OCI-LY7 (cell line): ENCODE measurements at regions of chr5 and their contacts with region 1.

Region 1: GRCh38 chr5:158695595-158696330 is 404.0 kb downstream of the EBF1 start:
- DNase-seq: peak; percentile 90
- H3K4me3 ChIP-seq: no peak overlapping the region
- H3K27ac ChIP-seq: peak overlapping the region; percentile 50
- H3K4me1 ChIP-seq: peaks cover 45% of the 10 kb centered on the region
- CTCF ChIP-seq: peak; percentile 100

Region 2: DNA sequence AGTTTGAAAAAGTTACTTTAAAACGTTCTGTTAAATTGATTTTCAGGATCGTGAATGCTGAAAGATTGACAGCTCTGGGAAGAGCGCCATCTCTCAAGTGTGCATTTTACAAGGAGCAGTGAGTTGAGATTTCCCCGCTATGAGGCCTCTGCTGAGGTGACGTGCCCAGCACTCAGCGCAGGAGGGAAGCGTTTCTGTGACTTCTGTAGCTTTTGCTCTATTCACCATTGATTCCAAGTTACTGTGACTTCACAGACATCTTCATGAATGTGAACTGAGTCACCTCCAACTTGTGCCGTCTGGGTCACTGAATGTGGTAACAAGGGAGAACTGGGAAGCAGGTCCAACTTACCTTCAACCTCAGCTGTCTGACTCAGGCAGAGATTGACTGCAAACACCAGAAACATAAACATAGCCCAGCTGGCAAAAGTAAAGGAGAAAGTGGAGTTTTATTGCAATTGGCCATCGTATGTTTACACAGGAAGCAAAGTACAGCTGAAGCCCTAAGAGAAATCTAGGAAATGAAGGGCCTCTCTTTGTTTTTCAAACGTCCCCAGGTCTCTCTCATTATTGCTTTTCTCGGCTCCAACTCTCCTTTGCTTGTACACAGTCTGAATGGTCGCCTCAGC is 408.0 kb before region 1 on chr5:
- CTCF ChIA-PET with region 1: no interaction called
- POLR2A ChIA-PET with region 1: no interaction called
- intact Hi-C with region 1: loop called (anchors 1 kb)
- DNase-seq: no peak
- H3K4me3 ChIP-seq: no peak overlapping the region
- H3K27ac ChIP-seq: no peak overlapping the region
- H3K4me1 ChIP-seq: peaks cover 22% of the 10 kb centered on the region
- CTCF ChIP-seq: no peak

Region 3: GRCh38 chr5:158354958-158355357 is 340.8 kb before region 1 on chr5:
- CTCF ChIA-PET with region 1: no interaction called
- POLR2A ChIA-PET with region 1: no interaction called
- intact Hi-C with region 1: no loop called
- DNase-seq: peak; percentile 11
- H3K4me3 ChIP-seq: no peak overlapping the region
- H3K27ac ChIP-seq: no peak overlapping the region
- H3K4me1 ChIP-seq: no peaks in the 10 kb centered on the region
- CTCF ChIP-seq: no peak

Region 4: DNA sequence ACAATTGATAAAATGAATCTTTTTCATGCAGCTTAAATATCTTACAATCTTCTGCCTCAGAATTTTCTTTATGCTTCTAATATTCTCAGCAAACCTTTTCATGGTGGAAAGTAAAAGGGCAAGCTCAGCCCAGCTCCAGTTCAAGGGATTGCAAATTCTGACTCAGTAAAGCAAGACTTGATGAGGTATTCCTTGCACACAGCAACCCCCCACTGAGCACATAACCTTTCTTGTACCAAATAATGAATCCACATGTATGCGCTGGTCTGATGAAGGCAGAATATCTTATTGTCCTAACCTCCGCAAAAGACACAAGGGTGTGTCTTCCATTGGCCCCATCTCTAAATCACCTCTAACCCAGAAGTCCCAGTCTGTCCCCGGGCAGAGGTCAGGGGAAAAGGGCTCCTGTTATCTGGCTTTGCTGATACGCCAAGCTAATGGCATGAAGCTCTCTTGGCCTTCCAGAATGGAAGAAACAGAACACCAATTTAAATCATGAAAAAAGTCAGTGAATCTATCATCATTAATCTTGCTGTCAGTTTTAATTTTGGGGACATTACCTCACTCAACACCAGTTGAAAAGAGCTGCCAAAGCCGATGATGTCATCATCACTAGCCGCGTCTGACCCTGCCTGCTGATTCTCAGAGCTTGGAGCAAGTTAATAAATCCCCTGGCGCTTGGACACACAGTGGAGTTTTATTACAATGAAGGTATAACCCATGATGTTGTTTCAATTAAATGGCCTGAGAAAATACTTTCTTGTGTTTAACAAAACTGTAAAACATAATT is 244.4 kb before region 1 on chr5:
- CTCF ChIA-PET with region 1: no interaction called
- POLR2A ChIA-PET with region 1: no interaction called
- intact Hi-C with region 1: no loop called
- DNase-seq: no peak
- H3K4me3 ChIP-seq: no peak overlapping the region
- H3K27ac ChIP-seq: no peak overlapping the region
- H3K4me1 ChIP-seq: no peaks in the 10 kb centered on the region
- CTCF ChIP-seq: no peak

Region 5: GRCh38 chr5:158770506-158770905 is 74.7 kb after region 1 on chr5:
- CTCF ChIA-PET with region 1: no interaction called
- POLR2A ChIA-PET with region 1: interaction called, 5 read pairs
- intact Hi-C with region 1: loop called (anchors 1 kb)
- DNase-seq: peak; percentile 65
- H3K4me3 ChIP-seq: no peak overlapping the region
- H3K27ac ChIP-seq: peak overlapping the region; percentile 23
- H3K4me1 ChIP-seq: peaks cover 83% of the 10 kb centered on the region
- CTCF ChIP-seq: peak; percentile 82

Region 6: GRCh38 chr5:158953929-158954534 is 258.3 kb after region 1 on chr5:
- CTCF ChIA-PET with region 1: no interaction called
- POLR2A ChIA-PET with region 1: interaction called, 4 read pairs
- intact Hi-C with region 1: loop called (anchors 2 kb)
- DNase-seq: peak; percentile 92
- H3K4me3 ChIP-seq: peak overlapping the region; percentile 53
- H3K27ac ChIP-seq: peak overlapping the region; percentile 98
- H3K4me1 ChIP-seq: peaks cover 88% of the 10 kb centered on the region
- CTCF ChIP-seq: no peak

Region 7: GRCh38 chr5:159100025-159100781 is 404.4 kb after region 1 on chr5:
- CTCF ChIA-PET with region 1: no interaction called
- POLR2A ChIA-PET with region 1: interaction called, 6 read pairs
- intact Hi-C with region 1: loop called (anchors 1 kb)
- DNase-seq: peak; percentile 93
- H3K4me3 ChIP-seq: peak overlapping the region; percentile 94
- H3K27ac ChIP-seq: peak overlapping the region; percentile 90
- H3K4me1 ChIP-seq: peaks cover 50% of the 10 kb centered on the region
- CTCF ChIP-seq: no peak